ENCODE measurements at regions of chr15 and their contacts with region 1.

Region 1: GRCh38 chr15:92881802-92882696 is 18.1 kb upstream of the CHD2 start:
- DNase-seq: peak; percentile 95 to 100 (median 99)
- ATAC-seq: peak; percentile 93
- H3K4me3 ChIP-seq: peak overlapping the region; percentile 61
- H3K4me3 Mint-ChIP-seq: peak overlapping the region; percentile 86 to 97 (median 91)
- H3K27ac ChIP-seq: peak overlapping the region; percentile 79
- H3K27ac Mint-ChIP-seq: peak overlapping the region; percentile 97 to 100 (median 99)
- H3K4me1 ChIP-seq: peaks cover 42 to 45% of the 10 kb centered on the region in 2 donors
- H3K4me1 Mint-ChIP-seq: peaks cover 40 to 72% (median 60%) of the 10 kb centered on the region in 7 donors
- H3K27me3 ChIP-seq: no peaks in the 10 kb centered on the region
- H3K27me3 Mint-ChIP-seq: peaks cover 0 to 2% (median 0%) of the 10 kb centered on the region in 5 donors

Region 2: GRCh38 chr15:92797168-92797951 is 84.7 kb before region 1 on chr15:
- CTCF ChIA-PET with region 1: interaction called, 4 read pairs
- POLR2A ChIA-PET with region 1: interaction called, 24 read pairs
- intact Hi-C with region 1: loop called in 1 of 2 experiments (anchors 1 kb)
- DNase-seq: peak in 7 of 9 donors; percentile 61 to 81 (median 74)
- ATAC-seq: peak; percentile 95
- H3K4me3 ChIP-seq: no peak overlapping the region
- H3K4me3 Mint-ChIP-seq: peak overlapping the region in 1 of 10 donors; percentile 12
- H3K27ac ChIP-seq: no peak overlapping the region
- H3K27ac Mint-ChIP-seq: peak overlapping the region; percentile 72 to 95 (median 79)
- H3K4me1 ChIP-seq: peaks cover 3 to 4% of the 10 kb centered on the region in 2 donors
- H3K4me1 Mint-ChIP-seq: peaks cover 6 to 23% (median 12%) of the 10 kb centered on the region in 7 donors
- H3K27me3 ChIP-seq: no peaks in the 10 kb centered on the region
- H3K27me3 Mint-ChIP-seq: no peaks in the 10 kb centered on the region

Region 3: GRCh38 chr15:92831655-92832328 is 50.3 kb before region 1 on chr15:
- CTCF ChIA-PET with region 1: interaction called, 38 read pairs
- POLR2A ChIA-PET with region 1: interaction called, 550 read pairs
- intact Hi-C with region 1: loop called (anchors 1 kb)
- DNase-seq: peak; percentile 53 to 98 (median 86)
- ATAC-seq: peak; percentile 94
- H3K4me3 ChIP-seq: peak overlapping the region; percentile 21
- H3K4me3 Mint-ChIP-seq: peak overlapping the region; percentile 74 to 91 (median 81)
- H3K27ac ChIP-seq: peak overlapping the region; percentile 81
- H3K27ac Mint-ChIP-seq: peak overlapping the region; percentile 92 to 98 (median 97)
- H3K4me1 ChIP-seq: peaks cover 31 to 53% of the 10 kb centered on the region in 2 donors
- H3K4me1 Mint-ChIP-seq: peaks cover 26 to 61% (median 50%) of the 10 kb centered on the region in 7 donors
- H3K27me3 ChIP-seq: no peaks in the 10 kb centered on the region
- H3K27me3 Mint-ChIP-seq: no peaks in the 10 kb centered on the region

Region 4: GRCh38 chr15:92861742-92862141 is 20.3 kb before region 1 on chr15:
- CTCF ChIA-PET with region 1: interaction called, 4 read pairs
- POLR2A ChIA-PET with region 1: interaction called, 550 read pairs
- intact Hi-C with region 1: no loop called
- DNase-seq: no peak
- ATAC-seq: no peak
- H3K4me3 ChIP-seq: no peak overlapping the region
- H3K4me3 Mint-ChIP-seq: no peak overlapping the region
- H3K27ac ChIP-seq: no peak overlapping the region
- H3K27ac Mint-ChIP-seq: no peak overlapping the region
- H3K4me1 ChIP-seq: peaks cover 0 to 4% of the 10 kb centered on the region in 2 donors
- H3K4me1 Mint-ChIP-seq: peaks cover 0 to 14% (median 3%) of the 10 kb centered on the region in 7 donors
- H3K27me3 ChIP-seq: no peaks in the 10 kb centered on the region
- H3K27me3 Mint-ChIP-seq: no peaks in the 10 kb centered on the region

Region 5: GRCh38 chr15:92903941-92904831 is 22.1 kb after region 1 on chr15:
- CTCF ChIA-PET with region 1: interaction called, 8 read pairs
- POLR2A ChIA-PET with region 1: interaction called, 762 read pairs
- intact Hi-C with region 1: loop called (anchors 1 kb)
- DNase-seq: peak; percentile 99
- ATAC-seq: peak; percentile 90
- H3K4me3 ChIP-seq: peak overlapping the region; percentile 79
- H3K4me3 Mint-ChIP-seq: peak overlapping the region; percentile 81 to 100 (median 94)
- H3K27ac ChIP-seq: peak overlapping the region; percentile 97
- H3K27ac Mint-ChIP-seq: peak overlapping the region; percentile 96 to 100 (median 100)
- H3K4me1 ChIP-seq: peaks cover 48 to 54% of the 10 kb centered on the region in 2 donors
- H3K4me1 Mint-ChIP-seq: peaks cover 39 to 71% (median 64%) of the 10 kb centered on the region in 7 donors
- H3K27me3 ChIP-seq: no peaks in the 10 kb centered on the region
- H3K27me3 Mint-ChIP-seq: no peaks in the 10 kb centered on the region

Measured in naive thymus-derived CD4-positive, alpha-beta T cell (primary cell).